ENCODE measurements at regions of chr10 and their contacts with region 1.

Region 1: GRCh38 chr10:7054900-7055299 is 355.9 kb downstream of the SFMBT2 start:
- DNase-seq: no peak

Region 2: GRCh38 chr10:7950991-7951847 is 896.3 kb after region 1 on chr10:
- intact Hi-C with region 1: loop called in 1 of 2 experiments (anchors 5 kb)
- DNase-seq: no peak

Measured in posterior vena cava (tissue), 2 donors.